GM12878 (cell line): ENCODE measurements at regions of chr5 and their contacts with region 1.

Region 1: DNA sequence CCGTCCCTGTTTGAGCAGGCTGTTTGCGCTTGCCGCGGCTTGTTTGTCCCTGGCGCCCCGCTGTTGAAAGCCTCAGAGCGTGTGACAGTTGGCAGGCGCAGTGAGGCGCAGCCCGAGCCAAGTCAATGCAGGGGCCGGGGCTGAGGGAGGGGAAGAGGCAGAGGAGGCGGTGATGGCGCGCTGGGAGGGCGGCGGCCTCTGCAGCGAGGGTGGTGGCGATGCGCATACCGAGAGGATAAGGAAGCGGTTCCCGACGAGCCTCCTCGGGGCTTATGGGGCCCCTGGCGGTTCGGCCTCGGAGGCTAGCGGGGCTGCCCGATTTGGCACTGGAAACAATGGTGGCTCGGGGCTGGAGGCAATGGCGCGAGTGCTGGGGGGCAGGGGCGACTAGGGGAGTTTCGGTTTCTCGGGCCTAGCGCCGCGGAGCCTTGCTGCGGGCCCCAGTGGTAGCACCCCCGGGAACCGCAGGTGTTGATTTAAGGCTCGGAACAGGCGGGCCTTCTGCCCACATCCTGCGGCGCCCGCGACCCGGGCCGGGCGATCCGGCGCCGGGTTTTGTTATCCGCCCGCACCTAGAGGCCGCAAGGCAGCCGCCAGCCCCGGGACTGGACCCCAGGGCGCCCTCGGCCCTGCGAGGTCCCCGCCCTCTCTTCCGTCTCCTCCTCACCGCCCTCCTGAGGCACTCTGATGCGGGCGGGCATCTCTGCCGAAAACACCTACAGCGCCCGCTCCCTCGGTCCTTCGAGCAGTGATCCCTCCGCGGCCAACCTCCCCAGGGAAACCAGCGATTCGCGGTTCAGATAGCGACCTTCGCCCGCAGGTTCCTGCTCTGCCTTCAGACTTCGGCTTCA is 947 bp upstream of the LNPEP start:
- DNase-seq: peak; percentile 86
- ATAC-seq: peak; percentile 77
- H3K4me3 ChIP-seq: peak overlapping the region; percentile 94
- H3K27ac ChIP-seq: peak overlapping the region; percentile 97
- H3K4me1 ChIP-seq: peaks cover 14% of the 10 kb centered on the region
- H3K27me3 ChIP-seq: no peaks in the 10 kb centered on the region
- CTCF ChIP-seq: no peak
- EP300 ChIP-seq: peak; percentile 26 to 74; a peak in 2 of 4 replicates
- POLR2A ChIP-seq: peak; percentile 85
- RAD21 ChIP-seq: no peak

Region 2: GRCh38 chr5:96807075-96807654 is 127.8 kb before region 1 on chr5:
- CTCF ChIA-PET with region 1: no interaction called
- POLR2A ChIA-PET with region 1: interaction called, 9 read pairs
- RAD21 ChIA-PET with region 1: no interaction called
- SMC1A ChIA-PET with region 1: interaction called, 6 read pairs
- in situ Hi-C with region 1: no loop called
- intact Hi-C with region 1: loop called (anchors 2 kb)
- DNase-seq: no peak
- ATAC-seq: peak; percentile 65
- H3K4me3 ChIP-seq: peak overlapping the region; percentile 76
- H3K27ac ChIP-seq: peak overlapping the region; percentile 95
- H3K4me1 ChIP-seq: peaks cover 3% of the 10 kb centered on the region
- H3K27me3 ChIP-seq: no peaks in the 10 kb centered on the region
- CTCF ChIP-seq: no peak
- EP300 ChIP-seq: no peak
- POLR2A ChIP-seq: no peak
- RAD21 ChIP-seq: 0 out of 2 replicates have a peak, but pooled peaks have one; percentile 2

Region 3: GRCh38 chr5:96885518-96886338 is 49.2 kb before region 1 on chr5:
- CTCF ChIA-PET with region 1: interaction called, 5 read pairs
- POLR2A ChIA-PET with region 1: interaction called, 6 read pairs
- RAD21 ChIA-PET with region 1: interaction called, 8 read pairs
- SMC1A ChIA-PET with region 1: interaction called, 23 read pairs
- in situ Hi-C with region 1: no loop called
- intact Hi-C with region 1: no loop called
- DNase-seq: peak; percentile 92
- ATAC-seq: peak; percentile 88
- H3K4me3 ChIP-seq: peak overlapping the region; percentile 31
- H3K27ac ChIP-seq: peak overlapping the region; percentile 71
- H3K4me1 ChIP-seq: peaks cover 33% of the 10 kb centered on the region
- H3K27me3 ChIP-seq: no peaks in the 10 kb centered on the region
- CTCF ChIP-seq: no peak
- EP300 ChIP-seq: peak; percentile 84 to 88; a peak in 2 of 4 replicates
- POLR2A ChIP-seq: no peak
- RAD21 ChIP-seq: no peak

Region 4: DNA sequence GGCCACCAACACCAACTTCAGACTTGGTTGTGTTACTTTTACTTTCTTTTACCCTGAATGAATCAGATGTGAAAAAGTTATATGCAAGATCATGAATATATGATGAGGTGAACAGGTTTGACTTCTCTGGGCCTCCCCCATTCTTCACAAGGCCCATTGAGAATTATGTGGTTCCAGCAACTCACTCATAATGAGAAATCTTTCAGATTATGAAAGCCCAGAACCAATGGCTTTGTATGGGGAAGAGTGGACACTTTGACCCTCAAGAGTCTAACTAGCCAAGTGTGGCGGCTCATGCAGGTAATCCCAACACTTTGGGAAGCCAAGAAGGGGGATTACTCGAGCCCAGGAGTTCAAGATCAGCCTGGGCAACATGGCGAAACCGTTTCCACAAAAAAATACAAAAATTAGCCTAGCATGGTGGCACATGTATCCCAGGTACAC is 15.2 kb before region 1 on chr5:
- CTCF ChIA-PET with region 1: interaction called, 6 read pairs
- POLR2A ChIA-PET with region 1: interaction called, 27 read pairs
- RAD21 ChIA-PET with region 1: interaction called, 26 read pairs
- SMC1A ChIA-PET with region 1: interaction called, 42 read pairs
- in situ Hi-C with region 1: no loop called
- intact Hi-C with region 1: loop called (anchors 2 kb)
- DNase-seq: no peak
- ATAC-seq: peak; percentile 85
- H3K4me3 ChIP-seq: no peak overlapping the region
- H3K27ac ChIP-seq: peak overlapping the region; percentile 98
- H3K4me1 ChIP-seq: peaks cover 42% of the 10 kb centered on the region
- H3K27me3 ChIP-seq: no peaks in the 10 kb centered on the region
- CTCF ChIP-seq: no peak
- EP300 ChIP-seq: no peak; a peak in 1 of 4 replicates
- POLR2A ChIP-seq: no peak
- RAD21 ChIP-seq: 0 out of 2 replicates have a peak, but pooled peaks have one; percentile 2

Region 5: DNA sequence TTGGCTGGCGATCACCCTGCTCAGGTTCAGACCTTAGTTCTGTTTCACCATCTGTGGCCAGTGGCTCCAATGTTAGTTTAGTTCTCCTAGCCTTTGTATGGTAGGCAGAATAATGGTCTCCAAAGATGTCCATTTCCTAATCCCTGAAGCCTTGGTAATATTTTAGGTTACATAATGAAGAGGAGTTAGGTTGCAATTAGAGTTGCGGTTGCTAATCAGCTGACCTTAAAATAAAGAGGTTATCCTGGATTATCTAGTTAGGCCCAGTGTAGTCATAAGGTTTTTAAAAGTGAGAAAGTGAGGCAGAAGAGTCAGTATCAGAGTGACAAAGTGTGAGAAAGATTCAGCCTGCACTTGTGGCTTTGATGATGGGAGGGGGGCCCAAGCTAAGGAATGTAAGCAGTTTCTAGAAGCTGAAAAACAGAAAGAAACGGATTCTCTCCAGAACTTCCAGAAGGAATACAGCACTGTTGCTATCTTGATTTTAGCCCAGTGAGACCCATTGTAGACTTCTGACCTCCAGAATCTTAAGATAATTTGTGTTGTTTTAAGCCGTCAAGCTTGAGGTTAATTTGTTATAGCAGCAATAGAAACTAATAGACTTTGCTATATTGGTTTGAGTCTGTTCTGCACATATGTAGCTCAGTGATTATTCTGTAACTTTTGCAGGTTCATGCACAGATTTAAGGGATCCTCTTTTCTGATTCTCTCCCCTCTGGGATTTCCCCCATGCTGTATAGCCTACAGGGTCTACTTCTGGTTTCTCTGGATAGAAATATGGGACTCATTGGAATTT is 22.5 kb after region 1 on chr5:
- CTCF ChIA-PET with region 1: interaction called, 17 read pairs
- POLR2A ChIA-PET with region 1: interaction called, 65 read pairs
- RAD21 ChIA-PET with region 1: interaction called, 31 read pairs
- SMC1A ChIA-PET with region 1: interaction called, 65 read pairs
- in situ Hi-C with region 1: no loop called
- intact Hi-C with region 1: loop called (anchors 1 kb)
- DNase-seq: peak; percentile 45
- ATAC-seq: peak; percentile 73
- H3K4me3 ChIP-seq: peak overlapping the region; percentile 72
- H3K27ac ChIP-seq: peak overlapping the region; percentile 84
- H3K4me1 ChIP-seq: peaks cover 32% of the 10 kb centered on the region
- H3K27me3 ChIP-seq: no peaks in the 10 kb centered on the region
- CTCF ChIP-seq: no peak
- EP300 ChIP-seq: 0 out of 4 replicates have a peak, but pooled peaks of 1 of the 2 experiments have one; percentile 43
- POLR2A ChIP-seq: no peak
- RAD21 ChIP-seq: no peak

Region 6: GRCh38 chr5:98928873-98929696 is 1994.2 kb after region 1 on chr5 and contains the start of gene CHD1:
- CTCF ChIA-PET with region 1: no interaction called
- POLR2A ChIA-PET with region 1: no interaction called
- RAD21 ChIA-PET with region 1: no interaction called
- SMC1A ChIA-PET with region 1: no interaction called
- in situ Hi-C with region 1: no loop called
- intact Hi-C with region 1: loop called (anchors 5 kb)
- DNase-seq: peak; percentile 81
- ATAC-seq: peak; percentile 77
- H3K4me3 ChIP-seq: peak within 1 kb of the TSS; percentile 98
- H3K27ac ChIP-seq: peak within 1 kb of the TSS; percentile 99
- H3K4me1 ChIP-seq: peaks cover 19% of the 10 kb centered on the region
- H3K27me3 ChIP-seq: no peaks in the 10 kb centered on the region
- CTCF ChIP-seq: no peak
- EP300 ChIP-seq: peak; percentile 24 to 55; a peak in 3 of 4 replicates
- POLR2A ChIP-seq: peak; percentile 89
- RAD21 ChIP-seq: no peak
- polyA plus RNA-seq, gene CHD1: 25.5 to 32.1 TPM